ENCODE measurements at regions of chr20 and their contacts with region 1.

Region 1: DNA sequence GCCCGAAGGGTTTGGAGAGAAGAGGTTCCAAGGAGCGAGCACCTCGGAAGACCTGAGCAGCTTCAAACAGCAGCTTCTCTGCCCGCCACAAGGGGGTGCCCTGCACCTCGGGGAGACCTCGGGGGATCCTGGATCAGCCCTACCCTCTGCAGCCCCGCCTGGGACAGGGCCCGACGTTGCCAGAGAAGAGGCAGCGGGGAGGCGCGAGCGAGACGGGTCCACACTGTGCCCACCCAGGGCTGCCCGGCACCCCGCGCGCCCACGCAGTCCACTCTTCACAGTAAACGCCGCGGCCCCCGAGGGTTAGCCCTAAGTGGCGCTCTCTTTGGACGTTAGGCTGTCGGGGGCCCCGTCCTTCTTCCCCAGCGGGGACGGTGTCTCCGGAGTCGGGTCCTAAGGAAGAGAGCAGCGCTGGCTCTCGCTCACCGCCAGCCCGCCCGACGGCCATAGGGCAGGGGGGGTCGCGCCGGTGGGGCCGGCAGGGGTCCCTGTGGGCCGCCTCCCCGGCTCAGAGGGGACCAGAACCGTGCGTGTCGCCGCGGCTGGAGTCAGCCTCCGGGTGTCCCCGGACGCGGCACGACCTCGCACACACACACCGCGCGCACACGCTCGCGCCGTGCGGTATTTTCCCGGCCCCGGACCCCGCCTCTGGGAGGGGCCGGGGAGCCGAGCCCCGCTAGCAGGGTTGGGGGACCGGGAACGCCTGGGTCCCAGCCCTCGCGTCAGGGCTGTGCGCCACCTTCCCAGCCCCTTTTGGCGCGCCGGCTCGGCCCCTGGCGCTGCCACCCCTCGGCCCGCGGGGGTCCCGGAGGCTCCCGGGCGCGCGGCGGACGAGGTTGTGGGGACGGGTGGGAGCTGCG is 929 bp downstream of the CDH22 start:
- DNase-seq: peak; percentile 49 to 89
- H3K4me3 ChIP-seq: peak overlapping the region; percentile 48 to 75 (median 55)
- H3K27ac ChIP-seq: no peak overlapping the region
- H3K4me1 ChIP-seq: peaks cover 0 to 7% (median 5%) of the 10 kb centered on the region in 4 experiments; a peak in 5 of 7 replicates
- H3K27me3 ChIP-seq: peaks cover 44 to 73% (median 67%) of the 10 kb centered on the region in 4 experiments
- CTCF ChIP-seq: peak; percentile 92 to 97 (median 96)
- EP300 ChIP-seq: 0 out of 3 replicates have a peak, but pooled peaks of 1 of the 2 experiments have one; percentile 22
- POLR2A ChIP-seq: no peak
- RAD21 ChIP-seq: peak; percentile 81 to 90

Region 2: GRCh38 chr20:46057856-46058598 is 249.3 kb before region 1 on chr20:
- CTCF ChIA-PET with region 1: no interaction called
- POLR2A ChIA-PET with region 1: no interaction called
- DNase-seq: no peak
- H3K4me3 ChIP-seq: peak overlapping the region; percentile 8 to 57 (median 36); a peak in 7 of 8 replicates
- H3K27ac ChIP-seq: no peak overlapping the region
- H3K4me1 ChIP-seq: peaks cover 0 to 14% (median 12%) of the 10 kb centered on the region in 4 experiments; a peak in 6 of 7 replicates
- H3K27me3 ChIP-seq: peaks cover 4 to 49% (median 34%) of the 10 kb centered on the region in 4 experiments
- CTCF ChIP-seq: peak; percentile 47 to 64 (median 57)
- EP300 ChIP-seq: no peak
- POLR2A ChIP-seq: no peak
- RAD21 ChIP-seq: peak; percentile 18 to 42; a peak in 3 of 4 replicates

Region 3: GRCh38 chr20:46118481-46119020 is 188.8 kb before region 1 on chr20:
- CTCF ChIA-PET with region 1: no interaction called
- POLR2A ChIA-PET with region 1: no interaction called
- DNase-seq: peak in 1 of 2 experiments; percentile 75
- H3K4me3 ChIP-seq: peak overlapping the region; percentile 53 to 72 (median 64)
- H3K27ac ChIP-seq: no peak overlapping the region
- H3K4me1 ChIP-seq: peaks cover 0 to 3% (median 0%) of the 10 kb centered on the region in 4 experiments; a peak in 2 of 7 replicates
- H3K27me3 ChIP-seq: peaks cover 0 to 24% (median 9%) of the 10 kb centered on the region in 4 experiments; a peak in 5 of 7 replicates
- CTCF ChIP-seq: peak in 1 of 3 experiments; percentile 19; a peak in 2 of 4 replicates
- EP300 ChIP-seq: no peak
- POLR2A ChIP-seq: no peak
- RAD21 ChIP-seq: peak in 1 of 2 experiments; percentile 22; a peak in 1 of 4 replicates

Region 4: GRCh38 chr20:46206025-46206424 is 101.3 kb before region 1 on chr20:
- CTCF ChIA-PET with region 1: no interaction called
- POLR2A ChIA-PET with region 1: no interaction called
- DNase-seq: no peak
- H3K4me3 ChIP-seq: no peak overlapping the region
- H3K27ac ChIP-seq: no peak overlapping the region
- H3K4me1 ChIP-seq: peaks cover 0 to 11% (median 5%) of the 10 kb centered on the region in 4 experiments; a peak in 5 of 7 replicates
- H3K27me3 ChIP-seq: peaks cover 0 to 2% (median 0%) of the 10 kb centered on the region in 4 experiments; a peak in 2 of 7 replicates
- CTCF ChIP-seq: no peak
- EP300 ChIP-seq: no peak
- POLR2A ChIP-seq: no peak
- RAD21 ChIP-seq: no peak

Region 5: DNA sequence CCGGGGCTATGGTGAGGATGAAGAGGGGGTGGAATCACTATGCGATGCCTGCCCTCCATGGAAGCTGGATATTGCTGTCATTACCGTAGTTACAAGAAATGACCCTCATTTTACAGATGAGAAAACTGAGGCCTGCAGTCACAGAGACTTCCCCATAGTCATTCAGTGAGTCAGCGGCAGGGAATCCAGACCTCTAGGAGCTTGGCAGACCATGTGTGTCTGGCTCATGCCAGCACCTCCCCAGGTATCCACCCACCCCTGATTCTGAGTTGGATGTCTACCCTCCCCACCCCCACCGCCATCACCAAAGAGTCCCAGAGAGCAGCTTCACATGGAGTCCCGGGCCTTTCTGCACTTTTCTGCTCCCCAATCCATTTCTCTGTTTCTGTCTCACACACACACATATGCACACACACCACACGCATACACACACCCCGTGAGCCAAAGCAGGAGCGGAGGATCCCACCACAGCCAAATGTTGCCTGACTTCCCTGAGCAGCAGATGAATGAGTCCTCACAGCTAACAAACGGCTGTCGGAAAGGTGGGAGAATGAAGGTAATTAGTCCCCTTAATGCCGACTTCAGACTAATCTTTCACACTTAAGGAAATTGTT is 23.8 kb before region 1 on chr20:
- CTCF ChIA-PET with region 1: interaction called, 18 read pairs
- POLR2A ChIA-PET with region 1: interaction called, 3 read pairs
- DNase-seq: no peak
- H3K4me3 ChIP-seq: no peak overlapping the region
- H3K27ac ChIP-seq: no peak overlapping the region
- H3K4me1 ChIP-seq: peaks cover 0 to 9% (median 1%) of the 10 kb centered on the region in 4 experiments; a peak in 1 of 7 replicates
- H3K27me3 ChIP-seq: no peaks in the 10 kb centered on the region
- CTCF ChIP-seq: no peak
- EP300 ChIP-seq: no peak
- POLR2A ChIP-seq: no peak
- RAD21 ChIP-seq: no peak

Region 6: GRCh38 chr20:46296526-46297250 is 10.7 kb before region 1 on chr20:
- CTCF ChIA-PET with region 1: interaction called, 21 read pairs
- POLR2A ChIA-PET with region 1: interaction called, 4 read pairs
- DNase-seq: no peak
- H3K4me3 ChIP-seq: no peak overlapping the region
- H3K27ac ChIP-seq: no peak overlapping the region
- H3K4me1 ChIP-seq: peaks cover 0 to 9% (median 3%) of the 10 kb centered on the region in 4 experiments; a peak in 4 of 7 replicates
- H3K27me3 ChIP-seq: peaks cover 0 to 3% (median 0%) of the 10 kb centered on the region in 4 experiments; a peak in 1 of 7 replicates
- CTCF ChIP-seq: no peak
- EP300 ChIP-seq: no peak
- POLR2A ChIP-seq: no peak
- RAD21 ChIP-seq: no peak

Region 7: GRCh38 chr20:46324960-46325703 is 17.8 kb after region 1 on chr20:
- CTCF ChIA-PET with region 1: interaction called, 46 read pairs
- POLR2A ChIA-PET with region 1: interaction called, 5 read pairs
- DNase-seq: no peak
- H3K4me3 ChIP-seq: no peak overlapping the region
- H3K27ac ChIP-seq: no peak overlapping the region
- H3K4me1 ChIP-seq: peaks cover 0 to 3% (median 2%) of the 10 kb centered on the region in 4 experiments; a peak in 4 of 7 replicates
- H3K27me3 ChIP-seq: 0 out of 7 replicates have a peak, but pooled peaks cover 0 to 2% (median 0%) of the 10 kb centered on the region in 4 experiments
- CTCF ChIP-seq: peak; percentile 31 to 58 (median 51)
- EP300 ChIP-seq: no peak
- POLR2A ChIP-seq: no peak
- RAD21 ChIP-seq: peak; percentile 28 to 55; a peak in 2 of 4 replicates

Region 8: GRCh38 chr20:46330072-46330763 is 22.8 kb after region 1 on chr20:
- CTCF ChIA-PET with region 1: interaction called, 46 read pairs
- POLR2A ChIA-PET with region 1: interaction called, 3 read pairs
- DNase-seq: no peak
- H3K4me3 ChIP-seq: no peak overlapping the region
- H3K27ac ChIP-seq: no peak overlapping the region
- H3K4me1 ChIP-seq: peaks cover 0 to 27% (median 9%) of the 10 kb centered on the region in 4 experiments; a peak in 6 of 7 replicates
- H3K27me3 ChIP-seq: peaks cover 0 to 3% (median 0%) of the 10 kb centered on the region in 4 experiments; a peak in 2 of 7 replicates
- CTCF ChIP-seq: no peak
- EP300 ChIP-seq: no peak
- POLR2A ChIP-seq: no peak
- RAD21 ChIP-seq: no peak

Region 9: DNA sequence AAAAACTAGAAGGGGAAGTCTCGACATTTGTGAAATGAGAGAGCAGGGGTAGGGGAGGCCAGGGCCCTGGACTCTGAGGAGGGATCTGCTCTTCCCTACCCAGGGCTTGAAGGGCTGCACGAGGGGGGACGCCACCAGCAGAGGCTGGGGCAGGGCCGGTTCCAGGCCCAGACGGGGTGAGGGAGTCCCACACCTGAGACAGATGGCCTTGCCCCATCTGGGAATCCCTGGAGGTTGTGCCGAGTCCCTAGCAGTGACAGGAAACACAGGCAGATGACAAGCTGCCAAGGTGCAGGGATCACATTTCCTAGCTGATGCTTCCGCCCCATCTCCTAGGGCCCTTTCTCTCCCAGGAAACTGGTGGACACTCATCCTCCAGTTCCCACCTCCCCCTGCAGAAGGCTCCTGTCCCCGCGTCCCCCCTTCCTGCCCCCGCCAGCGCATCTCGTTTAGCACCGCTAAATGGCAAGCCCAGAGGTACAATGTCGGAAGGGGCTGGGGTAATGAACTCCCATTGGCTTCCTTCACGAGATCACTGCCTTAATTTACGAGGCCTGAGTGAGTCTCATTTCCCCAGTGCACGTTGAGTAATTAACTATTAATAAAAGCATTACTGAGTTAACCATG is 36.1 kb after region 1 on chr20:
- CTCF ChIA-PET with region 1: interaction called, 76 read pairs
- POLR2A ChIA-PET with region 1: interaction called, 11 read pairs
- DNase-seq: no peak
- H3K4me3 ChIP-seq: no peak overlapping the region
- H3K27ac ChIP-seq: no peak overlapping the region
- H3K4me1 ChIP-seq: peaks cover 0 to 12% (median 5%) of the 10 kb centered on the region in 4 experiments; a peak in 6 of 7 replicates
- H3K27me3 ChIP-seq: peaks cover 0 to 15% (median 11%) of the 10 kb centered on the region in 4 experiments; a peak in 5 of 7 replicates
- CTCF ChIP-seq: no peak
- EP300 ChIP-seq: no peak
- POLR2A ChIP-seq: no peak
- RAD21 ChIP-seq: no peak